AG04449 (cell line): ENCODE measurements at regions of chr21 and their contacts with region 1.

Region 1: DNA sequence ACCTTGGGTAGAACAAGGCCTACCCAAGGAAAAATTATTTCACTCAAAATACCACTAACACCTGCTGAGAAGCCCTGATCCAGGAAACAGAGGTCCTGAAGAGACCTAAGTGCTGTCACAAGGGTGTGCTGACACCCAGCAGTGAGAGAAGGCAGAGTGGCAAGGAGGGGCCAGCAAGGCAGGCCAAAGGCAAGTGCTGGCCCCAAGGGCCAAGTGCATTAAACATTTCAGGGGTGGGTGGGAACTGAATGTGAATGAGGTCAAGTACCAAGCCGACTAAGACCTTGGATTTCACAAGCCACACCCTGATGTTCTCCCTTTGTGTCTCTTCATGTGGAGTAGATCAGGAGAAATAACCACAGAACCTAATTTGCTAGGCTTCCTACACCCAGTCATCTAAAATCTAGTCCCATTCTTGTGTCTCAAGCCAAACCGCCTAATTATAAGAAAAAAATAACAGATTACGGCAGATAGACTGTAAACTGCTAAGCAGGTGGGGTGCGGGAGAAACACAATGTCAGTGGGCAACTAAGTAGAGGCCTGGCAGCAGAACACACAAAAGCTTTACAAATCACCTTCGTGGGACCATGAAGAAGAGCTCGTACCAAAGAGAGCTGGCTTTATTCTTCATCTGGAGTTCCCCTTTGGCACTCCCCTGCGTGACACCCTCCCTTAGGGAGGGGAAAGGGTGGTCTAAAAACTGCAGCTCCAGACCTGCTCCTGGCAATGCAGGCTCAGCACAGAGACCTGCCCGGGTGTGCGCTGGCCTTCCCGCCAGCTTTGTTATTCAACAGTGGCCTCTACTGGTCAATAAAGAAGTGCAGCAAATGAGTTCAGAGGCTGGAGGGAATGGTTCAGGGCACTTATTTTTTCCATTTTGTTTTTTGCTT is 8.7 kb downstream of the UBE2G2 start:
- DNase-seq: no peak
- H3K4me3 ChIP-seq: no peak overlapping the region
- CTCF ChIP-seq: peak; percentile 62

Region 2: GRCh38 chr21:44461464-44462001 is 331.4 kb before region 1 on chr21:
- CTCF ChIA-PET with region 1: interaction called, 10 read pairs
- POLR2A ChIA-PET with region 1: no interaction called
- DNase-seq: no peak
- H3K4me3 ChIP-seq: no peak overlapping the region
- CTCF ChIP-seq: no peak

Region 3: GRCh38 chr21:44752634-44753291 is 40.2 kb before region 1 on chr21:
- CTCF ChIA-PET with region 1: interaction called, 10 read pairs
- POLR2A ChIA-PET with region 1: no interaction called
- DNase-seq: no peak
- H3K4me3 ChIP-seq: no peak overlapping the region
- CTCF ChIP-seq: no peak

Region 4: DNA sequence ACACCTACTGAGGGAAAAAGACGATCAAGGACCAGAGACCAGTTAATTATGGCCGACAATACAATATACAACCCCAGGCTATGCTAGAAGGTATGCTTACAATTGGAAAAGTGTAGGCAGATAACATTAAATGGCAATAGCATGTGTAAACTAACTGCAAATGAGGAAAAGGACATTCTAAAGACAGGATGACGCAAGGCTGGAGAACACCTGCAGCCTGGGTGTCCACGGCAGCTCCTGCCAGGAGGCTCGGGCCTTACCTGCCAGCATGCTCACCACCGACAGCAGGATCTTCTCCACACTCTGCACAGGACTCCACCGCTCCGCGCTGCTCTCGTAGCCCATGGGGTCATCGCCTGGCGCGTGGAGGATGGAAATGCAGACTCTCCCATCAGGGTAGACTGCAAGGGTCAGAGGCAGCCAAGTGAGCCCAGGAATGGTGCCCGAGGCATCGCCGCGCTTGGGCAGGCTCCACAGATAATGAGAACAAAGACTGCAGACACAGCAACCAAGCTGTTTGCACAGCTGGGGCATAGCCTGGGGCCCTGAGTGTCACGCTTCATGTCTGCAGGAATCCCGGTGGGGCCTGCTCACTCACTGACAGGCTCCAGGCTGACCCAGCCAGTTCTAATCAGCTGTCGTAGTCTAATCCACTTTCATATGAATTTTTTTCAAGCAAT is 19.5 kb before region 1 on chr21:
- CTCF ChIA-PET with region 1: interaction called, 27 read pairs
- POLR2A ChIA-PET with region 1: no interaction called
- DNase-seq: no peak
- H3K4me3 ChIP-seq: no peak overlapping the region
- CTCF ChIP-seq: no peak

Region 5: DNA sequence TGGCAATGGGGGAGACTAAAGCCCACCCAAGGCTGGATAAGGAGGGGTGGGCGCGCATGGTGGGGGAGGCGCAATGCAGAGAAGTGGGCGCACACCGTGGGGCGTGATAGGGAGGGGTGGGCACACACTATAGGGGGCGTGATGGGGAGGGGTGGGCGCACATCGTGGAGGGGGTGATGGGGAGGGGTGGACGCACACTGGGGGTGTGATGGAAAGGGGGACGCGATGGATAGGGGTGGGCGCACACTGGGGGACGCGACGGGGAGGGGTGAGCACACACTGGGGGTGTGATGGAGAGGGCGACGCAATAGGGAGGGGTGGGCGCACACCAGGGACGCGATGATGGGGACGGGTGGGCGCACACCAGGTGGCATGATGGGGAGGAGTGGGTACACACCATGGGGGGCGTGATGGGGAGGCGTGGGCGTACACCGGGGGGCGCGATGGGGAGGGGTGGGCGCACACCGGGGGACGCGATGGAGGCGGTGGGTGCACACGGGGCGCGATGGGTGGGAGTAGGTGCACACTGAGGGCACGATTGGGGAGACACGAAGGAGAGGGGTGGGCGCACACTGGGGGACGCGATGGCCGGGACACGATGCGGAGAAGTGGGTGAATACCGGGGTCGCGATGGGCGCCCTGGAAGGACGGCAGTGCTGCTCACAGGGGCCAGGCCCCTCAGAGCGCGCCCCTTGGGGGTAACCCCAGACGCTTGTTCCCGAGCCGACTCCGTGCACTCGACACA is 24.0 kb after region 1 on chr21:
- CTCF ChIA-PET with region 1: interaction called, 14 read pairs
- POLR2A ChIA-PET with region 1: no interaction called
- DNase-seq: no peak
- H3K4me3 ChIP-seq: peak overlapping the region; percentile 71
- CTCF ChIP-seq: no peak